Spleen (tissue), 13 donors: ENCODE measurements at regions of chr3 and their contacts with region 1.

Region 1: DNA sequence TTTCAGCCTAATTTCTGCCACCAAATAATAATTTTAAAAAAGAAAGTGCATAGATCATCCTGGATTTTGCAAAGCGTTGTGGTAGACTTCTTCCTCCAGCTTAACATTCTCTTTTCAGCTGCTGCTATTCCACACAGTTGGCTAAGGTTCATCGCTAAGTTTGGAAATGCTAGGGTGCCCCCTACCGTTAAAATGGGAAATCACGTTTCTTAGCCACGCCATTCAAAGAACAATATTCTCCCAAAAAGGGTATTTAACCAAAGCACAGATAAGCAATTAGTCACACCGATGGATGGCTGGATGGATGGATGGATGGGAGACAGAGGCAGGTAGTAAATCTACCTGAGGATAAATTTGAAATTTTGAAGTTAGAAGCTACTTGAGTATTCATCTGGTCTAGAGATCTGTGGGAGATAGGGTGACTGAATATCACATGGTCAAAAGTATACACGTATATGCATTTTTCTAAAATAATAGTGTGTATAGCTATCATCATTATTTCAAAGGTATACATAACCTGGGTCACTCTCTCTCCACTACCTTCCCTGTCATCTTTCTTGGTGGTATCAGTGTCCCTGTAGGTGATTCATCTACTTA is 67.2 kb downstream of the EFHB start:
- DNase-seq: no peak
- H3K4me3 ChIP-seq: no peak overlapping the region
- H3K27ac ChIP-seq: no peak overlapping the region
- H3K4me1 ChIP-seq: peaks cover 0 to 6% (median 0%) of the 10 kb centered on the region in 6 donors
- H3K27me3 ChIP-seq: no peaks in the 10 kb centered on the region
- CTCF ChIP-seq: peak in 10 of 11 experiments; percentile 50 to 80 (median 72)
- POLR2A ChIP-seq: no peak

Region 2: DNA sequence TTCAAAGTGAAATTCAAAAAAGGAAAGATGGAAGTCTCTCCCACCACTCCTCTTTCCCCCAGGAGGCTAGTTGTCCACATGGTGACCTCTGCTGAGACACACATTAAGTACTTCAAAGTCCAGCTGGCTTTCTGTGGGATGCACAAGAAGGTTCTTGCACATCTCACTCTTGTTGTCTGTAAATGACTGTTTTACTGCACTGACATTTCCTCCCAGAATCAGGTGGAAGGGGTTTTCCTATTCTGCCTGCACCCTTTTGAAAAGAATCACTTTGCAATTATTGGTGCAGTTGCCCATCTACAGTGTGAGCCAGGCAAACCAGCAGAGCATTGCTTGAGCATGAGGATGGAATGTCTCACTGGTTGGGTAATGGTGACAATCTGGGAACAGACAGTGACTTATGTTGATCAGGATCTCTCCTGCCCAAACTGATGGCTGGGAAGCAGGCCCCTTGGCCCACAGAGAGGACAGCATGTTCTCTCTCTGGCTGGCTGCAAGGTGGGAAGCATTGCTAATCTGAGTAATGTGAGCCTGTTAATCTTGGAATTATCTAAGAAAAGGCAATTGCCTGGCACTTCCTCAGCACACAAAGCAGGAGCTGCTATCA is 1094.0 kb before region 1 on chr3:
- intact Hi-C with region 1: no loop called
- DNase-seq: no peak
- H3K4me3 ChIP-seq: no peak overlapping the region
- H3K27ac ChIP-seq: no peak overlapping the region
- H3K4me1 ChIP-seq: no peaks in the 10 kb centered on the region
- H3K27me3 ChIP-seq: no peaks in the 10 kb centered on the region
- CTCF ChIP-seq: no peak
- POLR2A ChIP-seq: no peak

Region 3: DNA sequence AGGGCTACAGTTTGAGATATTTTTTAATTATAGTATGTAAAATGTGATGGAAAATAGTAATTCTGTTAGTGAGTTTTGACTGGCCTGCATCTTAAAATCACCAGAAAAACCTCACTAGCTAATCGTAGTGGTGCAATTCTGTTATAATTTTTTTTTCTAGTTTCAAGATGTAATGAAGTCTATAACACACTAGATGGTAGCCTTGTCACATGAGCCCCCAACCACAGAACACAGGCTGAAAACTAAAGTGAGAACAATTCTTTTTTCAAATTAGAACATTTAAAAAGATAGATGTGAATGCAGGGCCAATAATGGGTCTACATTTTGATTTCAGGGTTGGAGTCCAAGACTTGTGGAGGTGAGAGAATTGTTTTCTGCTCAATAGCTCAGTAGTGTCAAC is 801.8 kb before region 1 on chr3:
- intact Hi-C with region 1: loop called (anchors 10 kb)
- DNase-seq: no peak
- H3K4me3 ChIP-seq: no peak overlapping the region
- H3K27ac ChIP-seq: no peak overlapping the region
- H3K4me1 ChIP-seq: no peaks in the 10 kb centered on the region
- H3K27me3 ChIP-seq: no peaks in the 10 kb centered on the region
- CTCF ChIP-seq: peak in 5 of 11 experiments; percentile 7 to 44 (median 33)
- POLR2A ChIP-seq: no peak

Region 4: DNA sequence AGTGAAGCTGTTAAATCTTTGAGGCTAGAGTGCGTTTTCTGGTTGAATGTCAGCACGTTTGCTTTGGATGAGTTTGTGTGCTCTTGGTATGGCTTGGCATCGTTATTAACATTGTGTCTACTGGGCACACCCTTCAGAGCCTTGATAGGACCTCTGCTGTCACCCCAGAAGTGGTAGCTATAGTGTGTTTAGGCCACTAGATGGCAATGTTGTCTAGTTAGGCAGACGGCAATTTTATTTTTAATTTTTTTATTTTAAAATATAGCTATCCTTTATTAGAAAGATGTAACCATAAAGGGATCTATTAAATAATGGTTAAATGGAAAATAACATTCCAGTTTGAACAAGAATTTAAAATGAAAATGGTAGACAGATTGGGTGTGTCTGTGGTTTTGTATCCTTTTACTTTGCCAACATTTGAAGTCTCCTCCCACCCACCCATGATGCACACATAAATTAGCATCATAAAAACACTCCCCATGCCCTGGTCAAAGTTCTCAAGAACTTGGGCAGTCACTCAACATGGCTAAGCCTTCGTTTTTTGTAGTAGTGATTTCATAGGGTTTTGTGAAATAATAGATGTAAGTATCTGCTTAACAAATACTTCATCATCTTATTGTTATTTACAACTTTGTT is 517.8 kb before region 1 on chr3:
- intact Hi-C with region 1: loop called (anchors 10 kb)
- DNase-seq: no peak
- H3K4me3 ChIP-seq: no peak overlapping the region
- H3K27ac ChIP-seq: peak overlapping the region in 4 of 8 donors; percentile 57 to 76 (median 66)
- H3K4me1 ChIP-seq: peaks cover 0 to 31% (median 4%) of the 10 kb centered on the region in 6 donors
- H3K27me3 ChIP-seq: no peaks in the 10 kb centered on the region
- CTCF ChIP-seq: peak; percentile 24 to 78 (median 56)
- POLR2A ChIP-seq: no peak